A673 (cell line): ENCODE measurements at regions of chr17 and their contacts with region 1.

Region 1: DNA sequence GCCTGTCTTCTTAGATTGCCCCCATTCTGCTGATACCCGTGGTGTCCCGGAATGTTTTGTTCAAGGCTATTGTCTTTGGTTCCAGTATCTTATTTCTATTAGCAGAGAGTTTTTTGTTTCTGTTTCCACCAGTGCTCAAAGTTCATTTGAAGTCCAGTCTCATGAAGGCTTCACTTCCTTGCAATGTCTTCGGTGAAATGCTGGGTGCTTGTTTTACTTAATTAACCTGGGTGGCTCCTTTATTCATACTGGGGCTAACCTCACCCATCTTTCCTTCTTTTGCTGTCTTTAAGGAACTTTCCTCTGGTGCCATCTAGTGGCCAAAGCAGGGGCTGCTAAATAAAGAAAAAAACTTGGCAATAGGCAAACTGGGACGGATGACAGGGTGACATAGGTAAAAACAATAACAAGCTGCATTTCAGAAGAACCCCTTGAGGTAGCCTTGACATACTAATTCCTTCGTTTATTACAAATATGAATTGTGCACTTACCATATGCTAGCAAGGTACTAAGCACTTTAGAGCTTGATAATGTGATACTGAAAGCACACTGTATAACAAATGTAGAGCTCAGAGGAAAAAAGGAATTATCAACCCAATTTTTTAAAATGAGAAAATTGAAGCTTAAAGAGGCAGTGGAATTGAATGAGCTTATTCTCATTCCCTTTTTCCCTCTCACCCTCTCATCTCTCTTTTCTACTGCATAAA is 2.8 kb upstream of the SMIM36 start:
- DNase-seq: peak; percentile 86
- H3K4me3 ChIP-seq: no peak overlapping the region
- H3K27ac ChIP-seq: no peak overlapping the region
- H3K4me1 ChIP-seq: no peaks in the 10 kb centered on the region
- H3K27me3 ChIP-seq: peaks cover 9% of the 10 kb centered on the region
- CTCF ChIP-seq: peak; percentile 96

Region 2: DNA sequence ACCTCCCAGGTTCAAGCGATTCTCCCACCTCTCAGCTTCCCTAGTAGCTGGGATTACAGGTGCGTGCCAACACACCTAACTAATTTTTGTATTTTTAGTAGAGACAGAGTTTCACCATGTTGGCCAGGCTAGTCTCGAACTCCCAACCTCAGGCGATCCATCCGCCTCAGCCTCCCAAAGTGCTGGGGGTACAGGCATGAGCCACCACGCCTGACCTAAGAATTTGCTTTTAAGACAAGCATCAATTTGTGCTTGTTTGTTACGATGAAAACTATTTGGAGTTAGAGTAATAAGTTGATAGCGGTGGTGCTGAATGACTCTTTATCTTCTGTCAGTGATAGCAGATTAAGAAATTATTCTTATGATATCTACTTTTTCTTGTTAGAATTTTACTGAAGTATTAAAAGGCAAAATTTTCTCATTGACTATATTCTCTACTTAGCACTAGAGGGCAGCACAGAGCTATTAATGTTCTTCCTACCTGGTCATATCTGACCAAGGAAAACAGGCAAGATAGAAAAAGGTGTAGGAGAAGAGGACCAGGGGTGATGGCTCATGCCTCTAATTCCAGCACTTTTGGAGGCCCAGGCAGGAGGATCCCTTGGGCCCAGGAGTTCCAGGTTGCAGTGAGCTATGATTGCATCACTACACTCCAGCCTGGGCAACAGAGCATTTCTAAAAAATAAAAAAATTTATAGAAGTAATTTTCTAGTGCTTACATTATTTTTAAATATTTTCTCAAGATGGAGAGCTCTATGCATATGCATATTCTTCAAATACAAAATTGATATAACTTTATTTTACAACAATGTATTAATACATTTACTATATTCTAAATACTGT is 521.0 kb before region 1 on chr17:
- CTCF ChIA-PET with region 1: interaction called, 6 read pairs
- POLR2A ChIA-PET with region 1: no interaction called
- intact Hi-C with region 1: loop called (anchors 5 kb)
- DNase-seq: peak; percentile 74
- H3K4me3 ChIP-seq: no peak overlapping the region
- H3K27ac ChIP-seq: no peak overlapping the region
- H3K4me1 ChIP-seq: no peaks in the 10 kb centered on the region
- H3K27me3 ChIP-seq: no peaks in the 10 kb centered on the region
- CTCF ChIP-seq: peak; percentile 80

Region 3: GRCh38 chr17:55053855-55054254 is 460.2 kb before region 1 on chr17:
- CTCF ChIA-PET with region 1: no interaction called
- POLR2A ChIA-PET with region 1: no interaction called
- intact Hi-C with region 1: loop called (anchors 2 kb)
- DNase-seq: peak; percentile 58
- H3K4me3 ChIP-seq: no peak overlapping the region
- H3K27ac ChIP-seq: no peak overlapping the region
- H3K4me1 ChIP-seq: peaks cover 31% of the 10 kb centered on the region
- H3K27me3 ChIP-seq: no peaks in the 10 kb centered on the region
- CTCF ChIP-seq: peak; percentile 73

Region 4: GRCh38 chr17:55356434-55357328 is 157.4 kb before region 1 on chr17:
- CTCF ChIA-PET with region 1: interaction called, 7 read pairs
- POLR2A ChIA-PET with region 1: no interaction called
- intact Hi-C with region 1: loop called (anchors 1 kb)
- DNase-seq: peak; percentile 91
- H3K4me3 ChIP-seq: no peak overlapping the region
- H3K27ac ChIP-seq: no peak overlapping the region
- H3K4me1 ChIP-seq: peaks cover 3% of the 10 kb centered on the region
- H3K27me3 ChIP-seq: no peaks in the 10 kb centered on the region
- CTCF ChIP-seq: peak; percentile 91

Region 5: GRCh38 chr17:55567240-55568214 is 53.5 kb after region 1 on chr17:
- CTCF ChIA-PET with region 1: no interaction called
- POLR2A ChIA-PET with region 1: interaction called, 19 read pairs
- intact Hi-C with region 1: no loop called
- DNase-seq: no peak
- H3K4me3 ChIP-seq: no peak overlapping the region
- H3K27ac ChIP-seq: no peak overlapping the region
- H3K4me1 ChIP-seq: no peaks in the 10 kb centered on the region
- H3K27me3 ChIP-seq: peaks cover 2% of the 10 kb centered on the region
- CTCF ChIP-seq: no peak